MCF 10A (cell line): ENCODE measurements at regions of chr5 and their contacts with region 1.

Region 1: DNA sequence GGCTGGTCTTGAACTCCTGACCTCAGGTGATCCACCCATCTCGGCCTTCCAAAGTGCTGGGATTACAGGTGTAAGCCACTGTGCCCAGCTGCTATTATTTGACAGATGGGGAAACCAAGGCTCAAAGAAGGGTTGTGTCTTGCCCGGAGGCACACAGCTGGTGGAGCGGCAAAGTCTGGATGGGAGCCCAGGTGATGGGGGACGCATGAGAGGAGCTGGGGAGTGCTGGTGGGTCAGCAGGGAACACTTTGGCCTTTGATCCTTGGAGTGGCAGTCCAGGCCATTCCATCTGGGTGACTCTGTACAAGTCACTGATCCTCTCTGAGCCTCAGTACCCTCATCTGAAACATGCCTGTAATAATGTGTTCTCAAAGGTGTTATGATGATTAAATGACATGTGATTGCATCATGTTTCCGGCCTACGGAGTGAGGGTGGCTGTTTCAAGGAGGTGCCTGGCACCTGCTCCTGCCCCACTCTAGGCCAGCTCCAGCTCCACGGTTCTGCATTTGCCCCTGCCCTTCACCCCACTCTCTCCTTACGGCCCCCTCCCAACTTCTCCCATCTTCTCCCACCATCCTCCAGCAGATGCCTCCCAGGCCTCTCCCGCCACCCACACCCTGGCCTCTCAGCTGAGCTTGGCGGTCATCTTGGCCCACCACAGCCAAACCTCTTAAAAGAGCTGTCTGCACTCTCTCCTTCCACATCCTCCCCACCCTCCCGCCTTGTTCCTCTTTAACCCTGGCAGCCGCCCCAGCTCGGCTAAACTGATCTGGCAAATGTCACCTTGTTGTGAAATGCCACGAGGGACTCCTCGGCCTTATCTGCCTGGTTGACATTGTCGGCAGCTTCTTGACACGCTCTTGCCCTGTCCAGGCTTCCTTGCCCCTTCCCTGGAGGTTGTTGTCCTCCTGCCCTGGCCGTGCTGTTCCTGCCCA is 5.5 kb upstream of the DBN1 start:
- DNase-seq: peak; percentile 71
- H3K4me3 Mint-ChIP-seq: no peak overlapping the region
- H3K27ac Mint-ChIP-seq: peak overlapping the region; percentile 87
- H3K4me1 Mint-ChIP-seq: peaks cover 47% of the 10 kb centered on the region
- H3K27me3 Mint-ChIP-seq: no peaks in the 10 kb centered on the region
- CTCF ChIP-seq: no peak

Region 2: GRCh38 chr5:177006265-177006972 is 472.6 kb before region 1 on chr5 and contains the start of gene UIMC1:
- CTCF ChIA-PET with region 1: no interaction called
- POLR2A ChIA-PET with region 1: no interaction called
- intact Hi-C with region 1: no loop called
- DNase-seq: peak; percentile 96
- H3K4me3 Mint-ChIP-seq: peak within 1 kb of the TSS; percentile 96
- H3K27ac Mint-ChIP-seq: peak within 1 kb of the TSS; percentile 98
- H3K4me1 Mint-ChIP-seq: peaks cover 18% of the 10 kb centered on the region
- H3K27me3 Mint-ChIP-seq: no peaks in the 10 kb centered on the region
- CTCF ChIP-seq: no peak
- total RNA-seq, gene UIMC1: 79.3 and 96.3 TPM in 2 replicates

Region 3: DNA sequence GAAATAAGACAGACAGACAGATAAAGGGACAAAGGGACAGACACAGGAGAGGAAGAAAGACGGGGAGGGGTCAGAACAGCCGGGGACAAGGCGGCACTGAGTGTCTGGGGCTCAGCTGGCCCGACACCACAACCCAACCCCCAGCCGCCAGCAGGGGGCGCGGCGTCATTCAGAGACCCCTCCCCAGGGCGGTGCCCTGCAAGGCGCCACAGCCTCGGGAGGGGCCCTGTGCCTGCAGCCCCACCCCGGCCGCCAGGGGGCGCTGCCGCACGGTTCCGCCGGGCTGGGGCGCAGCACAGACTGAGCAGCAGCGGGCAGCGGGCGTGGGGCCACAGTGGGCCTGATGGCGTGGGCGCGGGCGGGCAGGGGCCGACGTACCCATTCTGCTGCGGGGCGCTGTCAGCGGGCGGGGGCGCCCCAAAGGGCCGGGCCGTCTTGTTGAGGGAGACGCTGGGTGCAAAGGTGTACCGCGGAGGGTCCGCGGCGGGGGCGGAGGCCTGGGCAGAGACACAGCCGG is 12.5 kb after region 1 on chr5:
- CTCF ChIA-PET with region 1: interaction called, 14 read pairs
- POLR2A ChIA-PET with region 1: interaction called, 18 read pairs
- intact Hi-C with region 1: loop called (anchors 2 kb)
- DNase-seq: peak; percentile 70
- H3K4me3 Mint-ChIP-seq: no peak overlapping the region
- H3K27ac Mint-ChIP-seq: no peak overlapping the region
- H3K4me1 Mint-ChIP-seq: peaks cover 36% of the 10 kb centered on the region
- H3K27me3 Mint-ChIP-seq: no peaks in the 10 kb centered on the region
- CTCF ChIP-seq: peak; percentile 98

Region 4: DNA sequence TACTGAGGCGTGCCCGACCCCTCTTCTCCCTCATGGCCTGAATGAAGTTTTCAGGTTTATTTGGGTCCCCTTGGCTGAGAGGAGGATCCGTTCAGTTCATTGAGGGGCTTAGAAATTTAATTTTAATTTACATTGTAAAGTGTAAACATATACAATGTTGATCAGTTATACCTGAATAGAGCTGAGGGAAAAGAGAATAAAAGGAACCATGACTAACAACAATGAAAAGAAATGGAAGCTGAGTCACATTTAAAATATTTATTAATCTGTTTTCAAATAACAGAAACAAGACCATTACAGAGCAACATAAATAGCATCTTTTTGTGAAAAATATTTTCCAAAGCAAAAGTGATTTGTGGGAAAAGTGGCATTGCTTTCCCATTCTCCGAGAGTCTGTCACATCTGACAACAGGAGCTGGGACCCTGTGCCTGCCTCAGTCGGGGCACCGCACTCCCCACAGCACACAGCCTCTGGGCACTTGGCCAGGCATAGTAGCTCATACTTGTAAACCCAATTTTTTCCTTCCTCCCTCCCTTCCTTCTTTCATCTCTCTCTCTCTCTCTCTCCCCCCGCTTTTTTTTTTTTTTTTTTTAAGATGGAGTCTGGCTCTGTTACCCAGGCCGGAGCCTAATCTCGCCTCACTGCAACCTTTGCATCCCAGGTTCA is 488.4 kb after region 1 on chr5:
- CTCF ChIA-PET with region 1: no interaction called
- POLR2A ChIA-PET with region 1: no interaction called
- intact Hi-C with region 1: no loop called
- DNase-seq: no peak
- H3K4me3 Mint-ChIP-seq: no peak overlapping the region
- H3K27ac Mint-ChIP-seq: no peak overlapping the region
- H3K4me1 Mint-ChIP-seq: no peaks in the 10 kb centered on the region
- H3K27me3 Mint-ChIP-seq: peaks cover 11% of the 10 kb centered on the region
- CTCF ChIP-seq: no peak